HepG2 (cell line): ENCODE measurements at regions of chr14 and their contacts with region 1.

Region 1: GRCh38 chr14:20632682-20633428 is 8.6 kb downstream of the OR6S1 start:
- DNase-seq: peak; percentile 93
- ATAC-seq: peak; percentile 79
- H3K4me3 ChIP-seq: peak overlapping the region; percentile 69 to 78 (median 77)
- H3K27ac ChIP-seq: peak overlapping the region; percentile 16
- H3K4me1 ChIP-seq: peaks cover 34% of the 10 kb centered on the region
- H3K27me3 ChIP-seq: no peaks in the 10 kb centered on the region; a peak in 1 of 5 replicates
- CTCF ChIP-seq: no peak
- EP300 ChIP-seq: 0 out of 4 replicates have a peak, but pooled peaks of 1 of the 2 experiments have one; percentile 9
- POLR2A ChIP-seq: no peak
- RAD21 ChIP-seq: no peak

Region 2: GRCh38 chr14:20657216-20658128 is 24.6 kb after region 1 on chr14:
- CTCF ChIA-PET with region 1: no interaction called
- POLR2A ChIA-PET with region 1: interaction called, 5 read pairs
- in situ Hi-C with region 1: no loop called
- intact Hi-C with region 1: loop called (anchors 2 kb)
- DNase-seq: peak; percentile 56
- ATAC-seq: peak; percentile 63
- H3K4me3 ChIP-seq: no peak overlapping the region
- H3K27ac ChIP-seq: no peak overlapping the region
- H3K4me1 ChIP-seq: peaks cover 64% of the 10 kb centered on the region
- H3K27me3 ChIP-seq: peaks cover 0 to 23% of the 10 kb centered on the region in 2 experiments; a peak in 3 of 5 replicates
- CTCF ChIP-seq: peak; percentile 62
- EP300 ChIP-seq: no peak
- POLR2A ChIP-seq: no peak
- RAD21 ChIP-seq: 0 out of 2 replicates have a peak, but pooled peaks have one; percentile 40

Region 3: GRCh38 chr14:20662968-20663732 is 30.3 kb after region 1 on chr14:
- CTCF ChIA-PET with region 1: no interaction called
- POLR2A ChIA-PET with region 1: interaction called, 7 read pairs
- in situ Hi-C with region 1: no loop called
- intact Hi-C with region 1: loop called (anchors 2 kb)
- DNase-seq: peak; percentile 76
- ATAC-seq: peak; percentile 64
- H3K4me3 ChIP-seq: peak overlapping the region in 1 of 3 experiments; percentile 50; a peak in 1 of 6 replicates
- H3K27ac ChIP-seq: no peak overlapping the region
- H3K4me1 ChIP-seq: peaks cover 84% of the 10 kb centered on the region
- H3K27me3 ChIP-seq: no peaks in the 10 kb centered on the region
- CTCF ChIP-seq: peak; percentile 88
- EP300 ChIP-seq: no peak
- POLR2A ChIP-seq: no peak
- RAD21 ChIP-seq: peak; percentile 91